ENCODE measurements at regions of chr13 and their contacts with region 1.

Region 1: DNA sequence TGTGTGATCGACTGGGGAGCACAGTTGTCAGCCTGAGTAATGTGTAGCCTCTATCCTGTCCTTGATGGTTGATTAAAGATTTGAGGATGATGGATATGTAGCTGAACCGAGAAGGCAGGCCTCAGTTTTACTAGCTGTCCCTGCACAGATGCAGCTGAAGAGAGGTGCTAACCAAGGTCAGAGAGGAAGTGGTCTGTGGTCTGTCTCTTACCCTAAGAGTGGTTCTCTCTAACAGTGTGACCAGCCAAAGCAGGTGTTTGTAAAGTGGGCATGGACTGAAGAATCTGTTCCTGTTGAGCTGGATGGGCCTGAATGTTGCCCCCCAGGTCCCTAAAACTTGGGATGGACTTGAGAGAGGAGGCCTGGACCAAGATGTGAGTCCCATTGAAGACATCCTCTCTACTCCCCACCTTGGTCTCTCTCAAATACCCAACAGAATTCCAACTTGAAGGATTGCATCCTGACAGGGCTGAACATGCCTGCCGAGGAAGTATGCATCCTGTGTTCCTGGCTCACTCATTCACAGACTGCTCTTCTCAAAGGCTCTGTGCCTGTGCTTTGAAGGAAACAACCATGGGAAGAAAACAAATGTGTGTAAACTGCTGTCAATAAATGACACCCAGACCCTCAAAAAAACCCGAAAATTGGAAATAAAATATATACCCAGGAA is 223.8 kb downstream of the MAB21L1 start:
- DNase-seq: no peak
- H3K4me3 ChIP-seq: no peak overlapping the region
- H3K27ac ChIP-seq: no peak overlapping the region
- H3K4me1 ChIP-seq: no peaks in the 10 kb centered on the region
- H3K27me3 ChIP-seq: no peaks in the 10 kb centered on the region
- CTCF ChIP-seq: no peak
- POLR2A ChIP-seq: no peak

Region 2: DNA sequence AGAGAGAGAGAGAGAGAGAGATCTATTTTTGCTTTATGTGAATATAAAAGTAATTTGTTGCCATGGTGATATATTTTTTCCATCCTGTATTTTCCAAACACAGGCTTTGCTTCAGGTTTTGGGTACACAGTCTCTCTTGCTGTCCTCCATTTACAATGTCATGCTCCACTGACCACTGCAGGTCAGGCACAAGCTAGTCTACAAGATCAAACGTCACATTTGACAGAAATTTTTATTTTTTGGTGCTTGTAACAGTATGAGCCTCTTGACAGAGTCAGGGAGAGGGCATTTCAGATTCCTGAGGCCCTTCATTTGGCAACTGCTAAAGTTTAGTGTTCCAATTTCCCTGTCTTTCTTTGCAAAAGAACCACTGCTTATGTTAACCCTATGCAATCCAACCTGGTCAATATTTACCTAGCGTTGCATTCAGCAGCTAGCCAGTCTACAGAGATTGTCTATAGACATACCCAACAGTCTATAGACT is 1259.8 kb before region 1 on chr13:
- intact Hi-C with region 1: loop called (anchors 5 kb)
- DNase-seq: no peak
- H3K4me3 ChIP-seq: no peak overlapping the region
- H3K27ac ChIP-seq: no peak overlapping the region
- H3K4me1 ChIP-seq: no peaks in the 10 kb centered on the region
- H3K27me3 ChIP-seq: no peaks in the 10 kb centered on the region
- CTCF ChIP-seq: no peak
- POLR2A ChIP-seq: no peak

Region 3: GRCh38 chr13:34416833-34417425 is 835.7 kb before region 1 on chr13:
- intact Hi-C with region 1: no loop called
- DNase-seq: no peak
- H3K4me3 ChIP-seq: no peak overlapping the region
- H3K27ac ChIP-seq: no peak overlapping the region
- H3K4me1 ChIP-seq: peaks cover 0 to 6% of the 10 kb centered on the region in 2 donors
- H3K27me3 ChIP-seq: no peaks in the 10 kb centered on the region
- CTCF ChIP-seq: no peak
- POLR2A ChIP-seq: no peak